GM12878 (cell line): ENCODE measurements at regions of chr18 and their contacts with region 1.

Region 1: DNA sequence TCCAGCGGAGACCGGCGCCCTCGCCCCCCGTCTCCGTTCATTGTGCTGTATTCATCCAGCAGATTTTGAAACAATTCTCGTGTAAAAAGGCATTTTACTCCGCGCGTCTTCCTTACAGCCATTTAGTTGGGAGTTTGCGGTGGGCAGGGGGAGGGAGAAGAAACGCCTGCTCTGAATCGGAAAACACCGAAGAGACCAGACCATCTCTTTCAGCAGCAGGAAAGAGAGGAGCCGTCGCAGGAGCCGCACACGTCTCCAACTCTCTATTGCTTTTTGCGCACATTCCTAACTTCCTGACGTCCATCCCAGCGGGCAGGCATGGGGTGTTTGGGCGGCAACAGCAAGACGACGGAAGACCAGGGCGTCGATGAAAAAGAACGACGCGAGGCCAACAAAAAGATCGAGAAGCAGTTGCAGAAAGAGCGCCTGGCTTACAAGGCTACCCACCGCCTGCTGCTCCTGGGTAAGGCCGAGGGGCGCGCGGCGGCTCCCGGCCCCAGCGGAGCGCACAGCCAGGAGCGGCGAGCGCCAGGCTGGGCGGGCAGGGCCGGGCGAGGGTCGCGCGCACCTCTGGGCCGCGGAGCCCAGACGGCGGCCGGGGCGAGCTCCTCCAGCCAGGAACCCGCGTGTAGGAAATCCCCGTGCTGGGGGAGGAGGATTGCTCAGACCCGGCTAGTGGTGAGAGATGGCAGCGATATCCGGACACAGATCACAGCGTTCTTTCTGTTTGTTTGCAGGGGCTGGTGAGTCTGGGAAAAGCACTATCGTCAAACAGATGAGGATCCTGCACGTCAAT is 63.2 kb downstream of the GNAL start:
- DNase-seq: no peak
- ATAC-seq: peak; percentile 19; the same call in 1 of the 3 replicates
- H3K4me3 ChIP-seq: no peak overlapping the region
- H3K27ac ChIP-seq: no peak overlapping the region
- H3K4me1 ChIP-seq: no peaks in the 10 kb centered on the region
- H3K27me3 ChIP-seq: peaks cover 2 to 6% of the 10 kb centered on the region in 2 experiments; a peak in 3 of 4 replicates
- CTCF ChIP-seq: no peak
- EP300 ChIP-seq: no peak
- POLR2A ChIP-seq: no peak
- RAD21 ChIP-seq: no peak

Region 2: GRCh38 chr18:11283479-11284161 is 468.7 kb before region 1 on chr18:
- CTCF ChIA-PET with region 1: no interaction called
- POLR2A ChIA-PET with region 1: no interaction called
- RAD21 ChIA-PET with region 1: no interaction called
- SMC1A ChIA-PET with region 1: no interaction called
- in situ Hi-C with region 1: no loop called
- intact Hi-C with region 1: no loop called
- DNase-seq: no peak
- ATAC-seq: no peak
- H3K4me3 ChIP-seq: no peak overlapping the region
- H3K27ac ChIP-seq: no peak overlapping the region
- H3K4me1 ChIP-seq: no peaks in the 10 kb centered on the region
- H3K27me3 ChIP-seq: no peaks in the 10 kb centered on the region
- CTCF ChIP-seq: no peak
- EP300 ChIP-seq: no peak
- POLR2A ChIP-seq: no peak
- RAD21 ChIP-seq: no peak

Region 3: GRCh38 chr18:11818486-11819203 is 66.3 kb after region 1 on chr18:
- CTCF ChIA-PET with region 1: no interaction called
- POLR2A ChIA-PET with region 1: no interaction called
- RAD21 ChIA-PET with region 1: no interaction called
- SMC1A ChIA-PET with region 1: no interaction called
- in situ Hi-C with region 1: no loop called
- intact Hi-C with region 1: loop called (anchors 10 kb)
- DNase-seq: no peak
- ATAC-seq: no peak
- H3K4me3 ChIP-seq: no peak overlapping the region
- H3K27ac ChIP-seq: no peak overlapping the region
- H3K4me1 ChIP-seq: no peaks in the 10 kb centered on the region
- H3K27me3 ChIP-seq: no peaks in the 10 kb centered on the region
- CTCF ChIP-seq: no peak
- EP300 ChIP-seq: no peak
- POLR2A ChIP-seq: no peak
- RAD21 ChIP-seq: no peak